Panc1 (cell line): ENCODE measurements at regions of chr1 and their contacts with region 1.

Region 1: DNA sequence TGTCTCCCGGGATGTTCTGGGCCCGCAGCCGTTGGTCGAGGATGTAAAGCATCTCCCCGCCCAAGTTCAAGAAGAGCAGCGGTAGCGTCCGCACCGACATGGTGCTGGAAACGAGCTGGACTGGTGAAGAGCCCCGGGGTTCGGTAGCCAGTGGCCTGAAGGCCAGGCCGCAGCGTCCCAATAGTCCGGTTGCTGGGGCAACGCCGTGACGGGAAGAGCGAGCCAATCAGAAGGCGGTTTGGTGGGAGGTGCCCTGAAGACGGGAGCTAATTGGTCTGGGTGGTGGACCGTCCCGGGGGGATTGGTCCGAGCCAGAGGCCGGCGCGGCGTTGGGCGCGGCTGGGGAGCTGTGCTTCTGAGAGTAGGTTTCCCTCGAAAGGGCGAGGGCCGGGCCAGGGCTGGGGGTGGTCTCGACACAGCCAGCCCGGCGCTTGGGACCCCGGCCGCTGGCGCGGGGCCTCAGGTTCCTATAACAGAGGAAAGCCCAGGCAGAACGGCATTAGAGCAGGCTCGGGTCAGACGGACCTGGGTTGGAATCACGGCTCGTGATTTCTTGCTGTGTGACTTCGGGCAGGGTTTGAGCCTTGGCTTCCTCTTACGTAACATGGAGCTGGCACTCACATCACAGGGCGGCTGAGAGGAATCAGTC is at the start of gene OSCP1:
- DNase-seq: peak; percentile 84
- ATAC-seq: peak; percentile 99
- H3K4me3 ChIP-seq: peak within 1 kb of the TSS; percentile 61 to 77
- H3K27ac ChIP-seq: peak within 1 kb of the TSS; percentile 90
- H3K4me1 ChIP-seq: peaks cover 3% of the 10 kb centered on the region; the same call in 1 of the 2 replicates
- H3K27me3 ChIP-seq: no peaks in the 10 kb centered on the region
- CTCF ChIP-seq: no peak
- total RNA-seq, gene OSCP1: 5.5 TPM

Region 2: GRCh38 chr1:36155408-36156328 is 294.7 kb before region 1 on chr1 and contains the start of gene MAP7D1:
- CTCF ChIA-PET with region 1: no interaction called
- POLR2A ChIA-PET with region 1: no interaction called
- in situ Hi-C with region 1: no loop called
- intact Hi-C with region 1: no loop called
- DNase-seq: no peak
- ATAC-seq: peak; percentile 87
- H3K4me3 ChIP-seq: peak within 1 kb of the TSS; percentile 87
- H3K27ac ChIP-seq: peak within 1 kb of the TSS; percentile 90
- H3K4me1 ChIP-seq: peaks cover 58% of the 10 kb centered on the region
- H3K27me3 ChIP-seq: no peaks in the 10 kb centered on the region
- CTCF ChIP-seq: no peak
- total RNA-seq, gene MAP7D1: 212 TPM

Region 3: GRCh38 chr1:36239941-36240637 is 210.3 kb before region 1 on chr1:
- CTCF ChIA-PET with region 1: no interaction called
- POLR2A ChIA-PET with region 1: interaction called, 11 read pairs
- in situ Hi-C with region 1: no loop called
- intact Hi-C with region 1: no loop called
- DNase-seq: no peak
- ATAC-seq: peak; percentile 31; the same call in 1 of the 2 replicates
- H3K4me3 ChIP-seq: no peak overlapping the region
- H3K27ac ChIP-seq: no peak overlapping the region
- H3K4me1 ChIP-seq: no peaks in the 10 kb centered on the region
- H3K27me3 ChIP-seq: no peaks in the 10 kb centered on the region
- CTCF ChIP-seq: no peak

Region 4: DNA sequence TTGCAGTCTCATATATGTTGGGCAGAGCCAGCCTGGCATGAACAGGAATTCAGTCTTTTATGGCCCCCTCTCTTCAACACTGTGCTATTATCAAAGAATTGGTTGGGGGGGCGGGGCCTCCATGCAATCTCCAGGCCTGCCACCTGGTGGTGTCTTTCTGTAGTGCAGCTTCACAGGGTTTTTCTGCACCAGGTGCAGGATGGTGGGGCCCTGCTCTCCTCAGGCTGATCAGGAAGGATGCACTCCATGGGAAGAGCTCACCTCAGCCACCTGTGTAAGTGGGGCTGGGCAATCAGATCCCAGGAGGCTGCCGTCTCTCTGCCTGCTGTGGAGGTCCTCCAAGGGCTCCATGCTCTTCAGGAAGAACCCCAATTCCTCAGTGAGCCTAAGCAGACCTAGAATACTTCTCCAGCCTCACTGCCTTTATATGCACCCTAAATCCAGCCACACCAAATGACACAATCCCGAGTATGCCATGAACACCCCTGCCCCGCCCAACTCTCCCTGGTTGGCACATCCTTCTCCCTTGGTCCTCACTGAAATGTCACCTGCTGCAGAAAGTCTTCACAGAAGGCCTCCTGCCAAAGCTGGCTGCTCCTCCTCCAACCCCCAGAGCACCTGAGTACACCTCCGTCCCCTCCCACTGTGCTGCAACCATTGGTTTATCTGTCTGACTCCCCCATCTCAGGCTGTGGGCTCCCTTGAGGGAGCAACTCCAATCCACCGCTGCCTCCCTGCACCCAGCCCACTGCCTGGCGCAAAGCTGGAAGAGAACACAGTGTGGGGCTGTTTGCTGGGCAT is 81.1 kb before region 1 on chr1:
- CTCF ChIA-PET with region 1: no interaction called
- POLR2A ChIA-PET with region 1: no interaction called
- in situ Hi-C with region 1: no loop called
- intact Hi-C with region 1: no loop called
- DNase-seq: peak; percentile 47
- ATAC-seq: peak; percentile 54
- H3K4me3 ChIP-seq: no peak overlapping the region
- H3K27ac ChIP-seq: peak overlapping the region; percentile 61
- H3K4me1 ChIP-seq: peaks cover 44% of the 10 kb centered on the region
- H3K27me3 ChIP-seq: no peaks in the 10 kb centered on the region
- CTCF ChIP-seq: peak; percentile 95

Region 5: DNA sequence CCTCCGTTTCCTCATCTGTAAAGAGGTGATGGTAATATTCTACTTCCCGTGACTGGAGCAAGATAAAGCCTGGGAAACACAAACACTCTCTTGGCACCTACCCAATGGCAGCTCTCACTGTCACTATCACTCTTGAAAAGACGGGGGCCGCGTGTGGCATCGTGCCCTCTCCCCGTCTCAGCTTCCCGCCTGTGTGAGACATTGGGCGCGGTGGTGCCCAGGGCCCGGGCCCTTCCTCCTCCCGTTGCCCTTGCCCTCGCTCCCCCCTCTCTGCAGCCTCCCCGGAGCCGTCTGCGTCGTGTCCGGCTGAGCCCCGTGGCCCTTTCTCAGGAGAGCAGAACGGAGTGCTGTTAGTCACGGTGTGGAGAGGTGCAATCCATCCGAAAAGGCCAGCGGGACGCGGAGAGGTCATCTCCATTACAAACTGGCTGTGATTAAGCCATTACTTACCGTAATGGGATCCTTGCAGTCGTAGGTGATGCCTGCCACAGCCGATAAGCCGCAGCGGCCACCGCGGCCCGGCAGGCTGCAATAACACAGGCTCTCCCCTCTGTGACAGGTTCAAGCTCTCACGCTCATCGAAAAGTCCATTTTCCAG is 867.6 kb after region 1 on chr1:
- CTCF ChIA-PET with region 1: no interaction called
- POLR2A ChIA-PET with region 1: no interaction called
- in situ Hi-C with region 1: no loop called
- intact Hi-C with region 1: no loop called
- DNase-seq: no peak
- ATAC-seq: no peak
- H3K4me3 ChIP-seq: no peak overlapping the region
- H3K27ac ChIP-seq: no peak overlapping the region
- H3K4me1 ChIP-seq: no peaks in the 10 kb centered on the region
- H3K27me3 ChIP-seq: peaks cover 17% of the 10 kb centered on the region; the same call in 1 of the 2 replicates
- CTCF ChIP-seq: no peak